B cell (primary cell): ENCODE measurements at regions of chr17 and their contacts with region 1.

Region 1: GRCh38 chr17:78925234-78925633 is at the start of gene TIMP2:
- DNase-seq: peak; percentile 86
- ATAC-seq: peak; percentile 78
- H3K4me3 ChIP-seq: peak within 1 kb of the TSS; percentile 60 to 70 (median 66)
- H3K4me3 Mint-ChIP-seq: peak within 1 kb of the TSS; percentile 88
- H3K27ac ChIP-seq: no peak within 1 kb of the TSS
- H3K27ac Mint-ChIP-seq: peak within 1 kb of the TSS; percentile 15
- H3K4me1 ChIP-seq: peaks cover 15 to 27% of the 10 kb centered on the region in 2 donors
- H3K4me1 Mint-ChIP-seq: peaks cover 13% of the 10 kb centered on the region
- H3K27me3 ChIP-seq: peaks cover 0 to 8% (median 2%) of the 10 kb centered on the region in 4 experiments
- H3K27me3 Mint-ChIP-seq: peaks cover 11% of the 10 kb centered on the region
- CTCF ChIP-seq: peak; percentile 66
- total RNA-seq, gene TIMP2: 10.0 and 11.4 TPM in 2 replicates

Region 2: GRCh38 chr17:78890498-78890897 is 34.7 kb before region 1 on chr17:
- CTCF ChIA-PET with region 1: interaction called, 4 read pairs
- POLR2A ChIA-PET with region 1: no interaction called
- intact Hi-C with region 1: loop called (anchors 2 kb)
- DNase-seq: peak; percentile 82
- ATAC-seq: peak; percentile 64
- H3K4me3 ChIP-seq: peak overlapping the region in 3 of 5 experiments; percentile 5 to 71 (median 56)
- H3K4me3 Mint-ChIP-seq: peak overlapping the region; percentile 72
- H3K27ac ChIP-seq: peak overlapping the region; percentile 93 to 96
- H3K27ac Mint-ChIP-seq: peak overlapping the region; percentile 93
- H3K4me1 ChIP-seq: peaks cover 41 to 53% of the 10 kb centered on the region in 2 donors
- H3K4me1 Mint-ChIP-seq: peaks cover 58% of the 10 kb centered on the region
- H3K27me3 ChIP-seq: no peaks in the 10 kb centered on the region
- H3K27me3 Mint-ChIP-seq: no peaks in the 10 kb centered on the region
- CTCF ChIP-seq: no peak

Region 3: DNA sequence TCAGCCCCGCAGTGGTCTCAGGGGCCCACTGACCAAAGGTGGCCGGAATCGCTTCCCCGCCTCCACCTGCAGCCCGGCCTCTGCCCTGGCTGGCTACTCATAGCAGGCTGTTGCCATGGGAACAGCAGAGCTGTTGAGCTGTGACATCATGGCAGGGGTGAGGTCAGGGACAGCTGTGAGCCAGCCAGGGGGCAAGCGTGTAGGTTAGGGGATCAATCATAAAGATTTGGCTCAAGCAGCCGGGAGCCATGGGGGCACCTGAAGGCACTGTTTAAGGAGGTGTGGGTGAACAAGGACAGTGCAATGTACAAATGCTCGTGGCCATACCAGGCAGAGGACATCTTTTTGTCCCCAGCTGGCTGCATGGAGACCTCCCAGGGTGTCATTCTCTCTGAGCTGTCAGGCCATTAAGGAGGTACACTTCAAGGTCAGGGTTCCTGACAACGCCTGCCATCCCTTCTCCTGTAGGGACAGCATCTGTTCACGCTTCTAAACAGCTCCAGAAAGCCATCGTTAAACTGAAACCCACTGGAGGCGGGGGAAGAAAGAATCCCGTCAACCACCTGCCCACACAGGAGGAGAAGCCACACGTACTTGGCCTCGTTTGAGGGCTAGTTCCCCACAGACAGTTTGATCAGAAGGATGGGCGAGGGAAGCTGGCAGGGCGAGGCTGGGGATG is 22.0 kb before region 1 on chr17 and contains the start of gene CEP295NL:
- CTCF ChIA-PET with region 1: no interaction called
- POLR2A ChIA-PET with region 1: no interaction called
- intact Hi-C with region 1: no loop called
- DNase-seq: no peak
- ATAC-seq: no peak
- H3K4me3 ChIP-seq: no peak within 1 kb of the TSS
- H3K4me3 Mint-ChIP-seq: no peak within 1 kb of the TSS
- H3K27ac ChIP-seq: no peak within 1 kb of the TSS
- H3K27ac Mint-ChIP-seq: no peak within 1 kb of the TSS
- H3K4me1 ChIP-seq: no peaks in the 10 kb centered on the region
- H3K4me1 Mint-ChIP-seq: no peaks in the 10 kb centered on the region
- H3K27me3 ChIP-seq: no peaks in the 10 kb centered on the region
- H3K27me3 Mint-ChIP-seq: peaks cover 10% of the 10 kb centered on the region
- CTCF ChIP-seq: no peak
- total RNA-seq, gene CEP295NL: 1.3 and 2.9 TPM in 2 replicates